ENCODE measurements at regions of chr18 and their contacts with region 1.

Region 1: GRCh38 chr18:11980555-11981382 is 538 bp upstream of the IMPA2 start:
- DNase-seq: peak; percentile 99
- H3K4me3 Mint-ChIP-seq: peak overlapping the region; percentile 75
- H3K27ac Mint-ChIP-seq: peak overlapping the region; percentile 94
- H3K4me1 Mint-ChIP-seq: peaks cover 10% of the 10 kb centered on the region
- H3K27me3 Mint-ChIP-seq: no peaks in the 10 kb centered on the region
- CTCF ChIP-seq: no peak

Region 2: GRCh38 chr18:11851146-11851805 is 129.5 kb before region 1 on chr18 and contains the start of gene CHMP1B:
- CTCF ChIA-PET with region 1: interaction called, 3 read pairs
- POLR2A ChIA-PET with region 1: interaction called, 20 read pairs
- intact Hi-C with region 1: loop called (anchors 5 kb)
- DNase-seq: peak; percentile 95
- H3K4me3 Mint-ChIP-seq: peak within 1 kb of the TSS; percentile 96
- H3K27ac Mint-ChIP-seq: peak within 1 kb of the TSS; percentile 99
- H3K4me1 Mint-ChIP-seq: peaks cover 12% of the 10 kb centered on the region
- H3K27me3 Mint-ChIP-seq: no peaks in the 10 kb centered on the region
- CTCF ChIP-seq: no peak
- total RNA-seq, gene CHMP1B: 39.7 and 50.1 TPM in 2 replicates

Region 3: DNA sequence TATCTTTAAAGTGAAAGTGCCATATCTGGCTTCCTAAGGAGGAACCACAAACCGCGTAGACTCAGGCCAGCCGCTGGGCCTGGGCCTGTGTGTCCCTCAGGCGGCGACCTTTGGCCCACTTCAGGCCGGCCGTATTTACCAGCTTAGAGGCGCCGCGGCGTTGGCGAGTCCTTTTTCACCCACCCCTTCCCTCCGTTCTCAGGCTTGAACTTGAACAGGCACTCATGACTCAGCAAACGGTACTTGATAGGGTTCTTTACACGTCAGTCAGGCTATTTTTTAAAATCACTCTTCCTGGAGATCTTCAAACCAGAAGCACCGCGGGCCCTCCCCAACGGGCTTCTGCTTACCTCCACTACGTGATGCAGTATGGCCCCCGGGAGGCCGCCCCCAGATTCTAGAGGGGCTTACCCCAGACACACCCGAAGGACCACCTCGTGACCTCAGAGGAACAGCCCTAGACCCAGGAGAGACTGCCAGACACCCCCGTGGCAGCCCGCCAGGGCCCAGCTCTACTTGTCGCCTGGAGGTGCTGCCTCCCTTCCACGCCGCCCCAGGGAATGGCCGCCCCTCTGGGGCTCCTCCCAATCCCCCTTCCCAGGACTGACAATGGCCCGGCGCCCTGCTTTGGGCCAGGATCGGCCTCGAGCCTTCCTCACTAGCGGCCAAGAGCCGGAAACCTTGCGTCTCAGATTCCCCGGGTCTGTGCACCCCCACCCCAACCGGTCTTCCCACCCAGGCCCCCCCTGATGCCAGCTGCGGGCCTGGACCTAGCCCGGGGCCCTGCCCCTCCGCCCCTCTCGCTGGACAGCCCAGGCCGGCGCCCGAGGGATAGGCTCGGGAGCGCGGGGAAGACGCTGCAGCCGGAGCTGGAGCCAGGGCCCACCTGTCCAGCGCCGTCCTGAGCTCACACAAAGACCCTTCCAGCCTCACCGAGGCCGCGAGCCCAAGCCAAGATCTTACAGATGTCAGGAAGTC is 33.3 kb before region 1 on chr18:
- CTCF ChIA-PET with region 1: interaction called, 4 read pairs
- POLR2A ChIA-PET with region 1: interaction called, 77 read pairs
- intact Hi-C with region 1: loop called (anchors 1 kb)
- DNase-seq: peak; percentile 98
- H3K4me3 Mint-ChIP-seq: peak overlapping the region; percentile 66
- H3K27ac Mint-ChIP-seq: peak overlapping the region; percentile 95
- H3K4me1 Mint-ChIP-seq: peaks cover 30% of the 10 kb centered on the region
- H3K27me3 Mint-ChIP-seq: no peaks in the 10 kb centered on the region
- CTCF ChIP-seq: no peak

Region 4: DNA sequence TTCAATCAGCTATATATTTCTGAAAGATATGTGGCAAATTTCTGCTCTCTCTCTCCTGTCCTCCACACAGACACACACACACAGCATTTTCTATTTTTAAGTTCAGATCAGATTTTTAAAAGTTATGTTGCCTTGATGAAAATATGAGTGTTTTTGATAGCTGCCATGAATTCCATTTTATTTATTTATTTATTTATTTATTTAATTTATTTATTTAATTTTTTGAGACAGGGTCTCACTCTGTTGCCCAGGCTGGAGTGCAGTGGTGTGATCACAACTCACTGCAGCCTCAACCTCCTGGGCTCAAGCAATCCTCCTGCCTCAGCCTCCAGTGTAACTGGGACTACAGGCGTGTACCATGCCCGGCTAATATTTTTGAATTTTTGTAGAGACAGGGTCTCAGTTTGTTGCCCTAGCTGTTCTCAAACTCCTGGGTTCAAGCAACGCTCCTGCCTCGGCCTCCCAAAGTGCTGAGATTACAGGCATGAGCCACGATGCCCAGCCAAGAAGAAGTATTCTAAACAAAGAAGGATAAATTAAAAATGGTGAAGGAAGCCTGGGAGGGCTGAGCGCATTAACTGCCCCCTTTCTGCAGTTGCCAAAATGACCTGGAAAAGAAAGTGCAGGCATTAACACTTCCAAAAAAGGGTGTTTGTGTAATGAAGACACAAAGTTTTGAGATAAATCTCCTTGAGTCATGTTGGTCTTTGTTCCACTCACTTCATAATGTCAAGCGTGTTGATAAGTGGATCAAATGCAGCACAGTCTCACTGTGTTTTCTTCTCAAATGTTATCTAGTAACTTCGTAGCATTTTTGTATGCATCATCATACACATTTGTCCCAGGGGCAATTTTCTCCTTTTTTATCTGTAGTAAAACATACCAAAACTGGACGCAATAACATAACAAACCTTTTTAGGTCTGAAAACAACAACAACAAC is 10.6 kb before region 1 on chr18:
- CTCF ChIA-PET with region 1: no interaction called
- POLR2A ChIA-PET with region 1: interaction called, 16 read pairs
- intact Hi-C with region 1: no loop called
- DNase-seq: no peak
- H3K4me3 Mint-ChIP-seq: no peak overlapping the region
- H3K27ac Mint-ChIP-seq: no peak overlapping the region
- H3K4me1 Mint-ChIP-seq: no peaks in the 10 kb centered on the region
- H3K27me3 Mint-ChIP-seq: no peaks in the 10 kb centered on the region
- CTCF ChIP-seq: no peak

Region 5: GRCh38 chr18:12038639-12039417 is 58.1 kb after region 1 on chr18:
- CTCF ChIA-PET with region 1: interaction called, 3 read pairs
- POLR2A ChIA-PET with region 1: interaction called, 10 read pairs
- intact Hi-C with region 1: no loop called
- DNase-seq: peak; percentile 70
- H3K4me3 Mint-ChIP-seq: peak overlapping the region; percentile 71
- H3K27ac Mint-ChIP-seq: no peak overlapping the region
- H3K4me1 Mint-ChIP-seq: peaks cover 16% of the 10 kb centered on the region
- H3K27me3 Mint-ChIP-seq: no peaks in the 10 kb centered on the region
- CTCF ChIP-seq: peak; percentile 98

Region 6: GRCh38 chr18:13051950-13052349 is 1071.2 kb after region 1 on chr18:
- CTCF ChIA-PET with region 1: no interaction called
- POLR2A ChIA-PET with region 1: no interaction called
- intact Hi-C with region 1: no loop called
- DNase-seq: no peak
- H3K4me3 Mint-ChIP-seq: no peak overlapping the region
- H3K27ac Mint-ChIP-seq: no peak overlapping the region
- H3K4me1 Mint-ChIP-seq: no peaks in the 10 kb centered on the region
- H3K27me3 Mint-ChIP-seq: no peaks in the 10 kb centered on the region
- CTCF ChIP-seq: no peak